CD4-positive, alpha-beta T cell (primary cell): ENCODE measurements at regions of chr11 and their contacts with region 1.

Region 1: DNA sequence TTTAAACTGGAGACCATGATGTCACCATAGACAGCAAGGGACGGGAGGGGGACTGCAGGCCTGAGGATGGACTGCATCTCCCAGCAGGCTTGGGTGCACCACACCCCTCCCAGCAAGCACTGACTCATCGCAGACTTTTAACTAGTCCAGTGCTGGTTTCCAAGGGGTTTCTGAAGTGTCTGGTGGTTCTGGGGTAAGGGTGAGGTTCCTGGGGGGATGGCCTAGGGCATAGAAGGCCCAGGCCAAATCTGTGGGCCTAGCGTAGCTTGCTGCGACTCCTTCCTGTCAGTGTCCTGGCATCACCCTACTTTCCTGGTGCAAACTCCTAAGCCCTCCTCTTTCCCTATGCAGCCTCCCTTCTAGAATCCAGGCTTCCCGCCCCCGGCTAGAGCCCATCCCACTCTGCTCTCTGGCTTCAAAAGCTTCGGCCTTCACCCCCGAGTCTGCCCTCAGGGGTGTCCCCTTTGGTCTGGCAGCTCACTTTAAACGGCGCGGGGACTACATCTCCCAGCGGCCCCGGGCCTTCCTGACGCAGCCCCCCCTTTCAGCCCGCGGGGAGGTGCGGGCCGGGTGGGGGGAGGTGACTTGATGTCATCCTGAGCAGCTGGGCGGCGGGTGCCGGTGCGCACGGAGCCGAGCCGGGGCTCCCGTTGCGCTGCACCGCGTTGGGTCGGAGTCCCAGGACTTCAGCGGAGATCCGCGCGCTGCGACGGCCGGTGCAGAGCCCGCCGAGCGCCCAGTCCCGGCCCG is at the start of gene PPP2R5B:
- DNase-seq: peak; percentile 79 to 95 (median 90)
- ATAC-seq: peak; percentile 92
- H3K4me3 ChIP-seq: peak within 1 kb of the TSS; percentile 69
- H3K4me3 Mint-ChIP-seq: peak within 1 kb of the TSS; percentile 95
- H3K27ac ChIP-seq: peak within 1 kb of the TSS; percentile 73 to 89
- H3K27ac Mint-ChIP-seq: peak within 1 kb of the TSS; percentile 97
- H3K4me1 ChIP-seq: peaks cover 30% of the 10 kb centered on the region
- H3K4me1 Mint-ChIP-seq: peaks cover 13% of the 10 kb centered on the region
- H3K27me3 ChIP-seq: no peaks in the 10 kb centered on the region
- H3K27me3 Mint-ChIP-seq: no peaks in the 10 kb centered on the region
- CTCF ChIP-seq: no peak
- total RNA-seq, gene PPP2R5B: 16.8 to 18.3 TPM

Region 2: DNA sequence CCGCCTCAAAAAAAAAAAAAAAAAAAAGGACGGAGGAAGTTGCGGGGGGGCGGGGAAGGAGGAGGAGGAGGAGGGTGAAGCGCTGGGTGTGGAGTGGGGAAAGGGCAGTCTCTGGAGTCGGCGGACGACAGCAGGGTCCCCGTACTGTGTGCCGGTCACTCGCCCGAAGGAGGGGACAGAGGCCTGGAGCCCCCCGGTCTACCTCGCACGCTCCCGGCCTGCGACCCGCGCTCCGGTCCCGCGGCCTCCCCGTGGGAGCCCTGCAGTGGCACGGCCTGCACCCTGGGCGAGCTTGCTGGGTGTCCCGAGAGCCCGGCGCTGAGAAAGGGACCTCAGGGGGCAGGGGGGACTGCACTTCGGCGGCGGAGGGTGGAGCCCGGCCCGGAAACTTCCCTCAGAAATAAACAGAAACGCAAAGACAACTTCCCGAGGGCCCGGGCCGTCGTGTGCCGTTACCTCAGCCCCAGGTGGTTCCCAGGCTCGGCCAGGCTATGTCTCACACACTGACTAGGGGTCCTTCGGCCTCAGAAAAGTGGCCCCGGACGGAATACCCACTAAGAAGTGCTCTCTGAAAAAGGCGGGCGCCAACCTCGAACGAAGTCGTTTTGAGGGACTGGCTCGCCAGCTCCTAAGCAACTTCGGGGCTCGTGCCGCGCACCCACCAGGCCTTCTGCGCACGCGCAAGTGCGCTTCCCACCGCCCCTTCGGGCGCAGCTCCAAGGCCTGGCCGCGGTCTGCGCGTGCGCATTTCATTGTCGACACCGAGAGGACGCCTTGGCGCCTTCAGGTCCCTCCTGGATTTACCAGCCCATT is 47.4 kb after region 1 on chr11 and contains the start of gene MAJIN:
- CTCF ChIA-PET with region 1: no interaction called
- POLR2A ChIA-PET with region 1: interaction called, 12 read pairs
- intact Hi-C with region 1: loop called in 1 of 2 experiments (anchors 5 kb)
- DNase-seq: peak; percentile 76 to 95 (median 90)
- ATAC-seq: peak; percentile 82
- H3K4me3 ChIP-seq: peak within 1 kb of the TSS; percentile 58
- H3K4me3 Mint-ChIP-seq: peak within 1 kb of the TSS; percentile 81
- H3K27ac ChIP-seq: peak within 1 kb of the TSS in 1 of 2 donors; percentile 29
- H3K27ac Mint-ChIP-seq: peak within 1 kb of the TSS; percentile 83
- H3K4me1 ChIP-seq: peaks cover 23% of the 10 kb centered on the region
- H3K4me1 Mint-ChIP-seq: peaks cover 26% of the 10 kb centered on the region
- H3K27me3 ChIP-seq: no peaks in the 10 kb centered on the region
- H3K27me3 Mint-ChIP-seq: no peaks in the 10 kb centered on the region
- CTCF ChIP-seq: no peak
- total RNA-seq, gene MAJIN: 0.50 to 0.55 TPM

Region 3: GRCh38 chr11:64996710-64997380 is 72.6 kb after region 1 on chr11 and contains the start of gene BATF2:
- CTCF ChIA-PET with region 1: no interaction called
- POLR2A ChIA-PET with region 1: no interaction called
- intact Hi-C with region 1: no loop called
- DNase-seq: peak in 4 of 14 experiments; percentile 6 to 43 (median 26)
- ATAC-seq: no peak
- H3K4me3 ChIP-seq: peak within 1 kb of the TSS; percentile 3
- H3K4me3 Mint-ChIP-seq: no peak within 1 kb of the TSS
- H3K27ac ChIP-seq: no peak within 1 kb of the TSS
- H3K27ac Mint-ChIP-seq: no peak within 1 kb of the TSS
- H3K4me1 ChIP-seq: peaks cover 17% of the 10 kb centered on the region
- H3K4me1 Mint-ChIP-seq: no peaks in the 10 kb centered on the region
- H3K27me3 ChIP-seq: no peaks in the 10 kb centered on the region
- H3K27me3 Mint-ChIP-seq: no peaks in the 10 kb centered on the region
- CTCF ChIP-seq: no peak
- total RNA-seq, gene BATF2: not detected

Region 4: DNA sequence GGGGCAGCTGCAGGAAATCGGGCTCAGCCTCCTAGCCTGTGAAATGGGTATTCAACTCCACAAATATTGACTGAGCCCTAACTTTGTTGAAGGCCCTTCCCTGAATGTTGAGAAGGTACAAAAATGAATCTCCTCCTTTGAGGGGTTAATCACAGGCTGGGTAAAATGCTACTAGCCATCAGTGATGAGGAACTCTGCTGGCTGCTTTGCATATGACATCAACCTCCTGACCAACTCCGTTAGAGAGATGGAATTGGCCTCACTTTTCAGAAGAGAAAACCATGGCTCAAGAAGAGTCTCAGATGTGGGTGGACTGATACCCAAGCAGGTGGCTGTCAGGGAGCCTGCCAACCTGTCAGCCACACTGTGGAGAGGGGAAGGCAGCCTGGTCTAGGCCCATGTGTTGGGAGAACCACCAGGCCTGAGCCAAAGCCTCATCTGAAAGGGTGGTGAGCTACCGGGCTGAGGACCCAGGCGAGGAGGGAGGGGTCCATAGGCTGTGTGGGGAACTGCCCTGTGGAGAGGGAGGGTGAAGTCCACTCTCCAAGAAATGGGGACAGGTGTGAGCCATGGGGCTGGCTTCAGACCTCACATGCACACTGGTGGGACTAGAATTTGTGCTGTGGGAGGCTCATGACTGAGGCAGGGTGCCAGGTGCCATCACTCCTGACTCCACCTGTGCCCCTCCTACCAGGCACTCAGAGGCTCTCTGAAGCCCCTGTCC is 147.8 kb after region 1 on chr11:
- CTCF ChIA-PET with region 1: no interaction called
- POLR2A ChIA-PET with region 1: no interaction called
- intact Hi-C with region 1: no loop called
- DNase-seq: no peak
- ATAC-seq: no peak
- H3K4me3 ChIP-seq: no peak overlapping the region
- H3K4me3 Mint-ChIP-seq: no peak overlapping the region
- H3K27ac ChIP-seq: no peak overlapping the region
- H3K27ac Mint-ChIP-seq: no peak overlapping the region
- H3K4me1 ChIP-seq: no peaks in the 10 kb centered on the region
- H3K4me1 Mint-ChIP-seq: no peaks in the 10 kb centered on the region
- H3K27me3 ChIP-seq: no peaks in the 10 kb centered on the region
- H3K27me3 Mint-ChIP-seq: no peaks in the 10 kb centered on the region
- CTCF ChIP-seq: no peak

Region 5: GRCh38 chr11:65083834-65084597 is 159.7 kb after region 1 on chr11 and contains the starts of genes CDCA5 and ZFPL1:
- CTCF ChIA-PET with region 1: no interaction called
- POLR2A ChIA-PET with region 1: no interaction called
- intact Hi-C with region 1: loop called in 1 of 2 experiments (anchors 5 kb)
- DNase-seq: peak; percentile 92 to 98 (median 95)
- ATAC-seq: peak; percentile 87
- H3K4me3 ChIP-seq: peak within 1 kb of the TSS; percentile 80
- H3K4me3 Mint-ChIP-seq: peak within 1 kb of the TSS; percentile 98
- H3K27ac ChIP-seq: peak within 1 kb of the TSS; percentile 86 to 97
- H3K27ac Mint-ChIP-seq: peak within 1 kb of the TSS; percentile 97
- H3K4me1 ChIP-seq: peaks cover 21% of the 10 kb centered on the region
- H3K4me1 Mint-ChIP-seq: peaks cover 33% of the 10 kb centered on the region
- H3K27me3 ChIP-seq: no peaks in the 10 kb centered on the region
- H3K27me3 Mint-ChIP-seq: no peaks in the 10 kb centered on the region
- CTCF ChIP-seq: no peak
- total RNA-seq, gene CDCA5: 0.77 to 0.84 TPM
- total RNA-seq, gene ZFPL1: 46.2 to 47.7 TPM